Body of pancreas (tissue), 4 donors: ENCODE measurements at regions of chr18 and their contacts with region 1.

Region 1: DNA sequence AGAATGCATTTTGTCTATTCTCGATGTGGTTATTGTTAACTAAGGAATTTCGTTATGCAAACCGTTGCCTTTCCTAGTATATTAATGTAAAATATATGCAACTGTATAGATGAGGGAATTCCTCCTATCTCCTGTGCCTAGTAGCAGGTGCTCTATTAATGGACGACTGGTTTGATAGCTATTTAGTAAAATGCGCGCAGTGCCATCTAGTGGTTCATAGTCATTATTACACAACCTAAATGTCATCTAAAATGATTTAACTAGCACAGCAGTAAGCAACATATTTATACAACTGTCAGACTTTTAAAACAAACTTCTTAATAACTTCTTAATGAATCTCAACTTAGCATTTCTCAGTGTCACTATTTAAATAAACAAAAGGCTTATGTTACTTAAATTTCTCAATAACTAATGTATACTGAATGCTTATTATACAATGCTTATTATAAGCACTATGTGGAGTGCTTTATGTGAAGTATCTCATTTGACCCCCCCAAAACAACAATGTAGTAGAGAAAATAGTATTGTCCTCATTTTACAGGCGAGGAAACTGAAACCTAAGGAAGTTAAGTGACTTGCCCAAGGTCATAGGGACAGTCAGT is 77.9 kb downstream of the DTNA start:
- DNase-seq: peak; percentile 45 to 67 (median 49)
- ATAC-seq: peak; percentile 75
- H3K4me3 ChIP-seq: no peak overlapping the region
- H3K27ac ChIP-seq: no peak overlapping the region
- H3K4me1 ChIP-seq: no peaks in the 10 kb centered on the region
- H3K27me3 ChIP-seq: no peaks in the 10 kb centered on the region
- CTCF ChIP-seq: peak; percentile 47 to 85 (median 78)
- POLR2A ChIP-seq: no peak

Region 2: GRCh38 chr18:34352385-34353163 is 435.5 kb before region 1 on chr18:
- intact Hi-C with region 1: loop called (anchors 5 kb)
- DNase-seq: peak; percentile 16 to 51 (median 38)
- ATAC-seq: peak; percentile 45
- H3K4me3 ChIP-seq: no peak overlapping the region
- H3K27ac ChIP-seq: no peak overlapping the region
- H3K4me1 ChIP-seq: no peaks in the 10 kb centered on the region
- H3K27me3 ChIP-seq: no peaks in the 10 kb centered on the region
- CTCF ChIP-seq: peak in 6 of 7 experiments; percentile 26 to 63 (median 51)
- POLR2A ChIP-seq: no peak

Region 3: DNA sequence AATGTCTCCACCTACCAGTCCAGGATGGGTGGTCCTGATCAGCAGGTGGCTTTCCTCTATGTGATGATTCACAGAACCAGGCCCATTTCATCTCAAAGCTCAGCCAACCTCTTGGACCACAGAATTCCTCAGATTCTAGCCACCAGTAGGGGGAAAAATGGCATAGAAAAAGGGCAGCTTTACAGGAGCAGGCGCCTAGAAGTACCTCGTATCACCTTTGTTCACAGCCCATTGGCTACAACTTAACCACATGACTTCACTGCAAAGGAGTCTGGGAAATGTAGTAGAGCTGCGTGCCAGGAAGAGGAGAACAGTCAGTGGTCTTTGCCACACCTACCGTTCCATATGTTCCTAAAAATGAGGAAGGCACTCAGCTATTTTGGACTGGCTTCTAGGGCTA is 140.8 kb before region 1 on chr18:
- intact Hi-C with region 1: loop called (anchors 10 kb)
- DNase-seq: no peak
- ATAC-seq: no peak
- H3K4me3 ChIP-seq: no peak overlapping the region
- H3K27ac ChIP-seq: no peak overlapping the region
- H3K4me1 ChIP-seq: peaks cover 28% of the 10 kb centered on the region
- H3K27me3 ChIP-seq: no peaks in the 10 kb centered on the region
- CTCF ChIP-seq: no peak
- POLR2A ChIP-seq: no peak